Gastrocnemius medialis (tissue), 4 donors: ENCODE measurements at regions of chr5 and their contacts with region 1.

Region 1: GRCh38 chr5:172188033-172188892 is at the start of gene STK10:
- DNase-seq: peak; percentile 80 to 87
- ATAC-seq: peak; percentile 88 to 90
- H3K4me3 ChIP-seq: peak within 1 kb of the TSS; percentile 57 to 87 (median 86)
- H3K27ac ChIP-seq: peak within 1 kb of the TSS; percentile 79 to 88 (median 84)
- H3K4me1 ChIP-seq: peaks cover 14 to 15% of the 10 kb centered on the region in 2 donors
- H3K27me3 ChIP-seq: no peaks in the 10 kb centered on the region
- CTCF ChIP-seq: peak; percentile 80 to 94 (median 84)
- POLR2A ChIP-seq: peak; percentile 68 to 71
- total RNA-seq, gene STK10: 5.4 to 18.3 (median 5.7) TPM

Region 2: DNA sequence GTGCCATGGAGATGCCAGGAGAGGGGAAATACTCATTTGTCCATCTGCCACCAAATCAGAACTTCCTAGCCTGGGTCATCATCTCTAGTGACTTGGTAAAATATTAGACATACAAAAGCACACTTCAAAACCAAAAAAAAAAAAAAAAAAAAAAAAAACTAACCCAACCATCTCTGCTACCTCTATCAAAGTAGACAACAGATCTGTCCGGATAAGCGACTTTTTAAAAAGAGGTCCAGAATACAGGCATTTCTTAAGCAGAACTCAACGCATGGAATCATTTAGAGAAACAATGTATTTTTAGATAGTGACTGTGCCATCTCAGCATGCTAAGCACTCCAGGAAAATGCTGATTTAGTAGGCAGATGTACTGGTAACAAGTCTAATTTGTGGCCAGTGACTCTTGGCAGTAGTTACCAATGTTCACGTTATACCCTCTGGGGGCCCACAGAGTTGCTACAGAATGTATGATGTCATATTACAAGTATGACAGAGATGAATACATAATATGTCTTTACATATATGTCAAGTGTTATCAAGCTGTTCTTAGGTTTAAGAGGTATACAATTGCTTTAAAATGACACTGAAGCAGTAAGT is 294.9 kb before region 1 on chr5:
- in situ Hi-C with region 1: no loop called
- intact Hi-C with region 1: no loop called
- DNase-seq: no peak
- ATAC-seq: no peak
- H3K4me3 ChIP-seq: no peak overlapping the region
- H3K27ac ChIP-seq: no peak overlapping the region
- H3K4me1 ChIP-seq: peaks cover 9% of the 10 kb centered on the region in 2 donors
- H3K27me3 ChIP-seq: no peaks in the 10 kb centered on the region
- CTCF ChIP-seq: no peak
- POLR2A ChIP-seq: no peak

Region 3: DNA sequence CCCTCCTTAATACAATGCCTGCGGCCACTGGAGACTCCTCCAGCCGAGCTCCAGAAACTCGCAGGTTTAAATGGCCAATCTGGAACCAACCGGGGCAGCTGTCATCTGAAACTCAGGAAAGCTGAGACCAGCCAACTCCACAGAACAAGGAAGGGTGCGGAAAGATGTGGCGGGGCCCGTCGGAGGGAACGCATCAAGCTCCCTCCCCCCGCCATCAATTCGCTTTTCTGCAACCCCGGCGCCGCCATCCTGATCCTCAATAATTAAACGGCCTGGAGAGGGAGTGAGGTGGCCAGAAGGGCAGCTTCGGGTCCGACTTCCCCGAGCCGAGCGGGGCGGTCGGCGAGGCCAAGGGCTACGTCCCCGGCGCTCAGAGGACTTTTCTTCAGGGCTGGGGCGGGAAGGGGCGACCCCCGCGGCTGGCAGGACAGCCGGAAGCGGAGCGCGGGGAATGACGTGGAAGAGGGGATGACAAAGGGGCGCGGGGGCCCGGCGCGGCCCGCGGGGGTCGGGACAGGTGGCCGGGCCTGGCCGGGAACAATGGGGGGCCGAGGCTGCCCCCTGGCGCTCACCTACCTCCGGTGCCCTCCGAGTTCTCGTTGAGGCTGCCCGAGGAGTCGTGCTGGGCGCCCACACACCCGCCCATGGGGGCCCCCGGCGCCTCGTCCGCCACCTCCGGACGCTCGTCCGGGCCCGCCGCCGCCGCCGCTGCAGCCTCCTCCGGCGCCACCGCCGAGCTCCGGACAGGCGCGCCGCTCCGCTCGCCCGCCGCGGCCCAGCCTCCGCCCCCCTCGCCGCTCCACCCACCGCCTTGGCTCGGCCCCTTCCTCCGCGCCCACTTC is 95.0 kb after region 1 on chr5 and contains the start of gene UBTD2:
- in situ Hi-C with region 1: loop called in 2 of 4 experiments (anchors 10 to 25 kb)
- intact Hi-C with region 1: loop called (anchors 1 kb)
- DNase-seq: peak; percentile 64 to 73
- ATAC-seq: peak; percentile 90 to 92
- H3K4me3 ChIP-seq: peak within 1 kb of the TSS; percentile 85 to 100 (median 91)
- H3K27ac ChIP-seq: peak within 1 kb of the TSS; percentile 91 to 98 (median 94)
- H3K4me1 ChIP-seq: peaks cover 16 to 21% of the 10 kb centered on the region in 2 donors
- H3K27me3 ChIP-seq: no peaks in the 10 kb centered on the region
- CTCF ChIP-seq: peak; percentile 39 to 73 (median 58)
- POLR2A ChIP-seq: no peak
- total RNA-seq, gene UBTD2: 6.0 to 11.4 (median 9.8) TPM

Region 4: GRCh38 chr5:172293054-172293744 is 104.9 kb after region 1 on chr5:
- in situ Hi-C with region 1: loop called (anchors 5 to 25 kb)
- intact Hi-C with region 1: loop called (anchors 1 kb)
- DNase-seq: peak; percentile 53 to 71
- ATAC-seq: peak; percentile 97 to 99
- H3K4me3 ChIP-seq: no peak overlapping the region
- H3K27ac ChIP-seq: no peak overlapping the region
- H3K4me1 ChIP-seq: peaks cover 4 to 7% of the 10 kb centered on the region in 2 donors
- H3K27me3 ChIP-seq: no peaks in the 10 kb centered on the region
- CTCF ChIP-seq: peak; percentile 59 to 87 (median 68)
- POLR2A ChIP-seq: no peak